Common myeloid progenitor, CD34-positive (primary cell): ENCODE measurements at regions of chr6 and their contacts with region 1.

Region 1: DNA sequence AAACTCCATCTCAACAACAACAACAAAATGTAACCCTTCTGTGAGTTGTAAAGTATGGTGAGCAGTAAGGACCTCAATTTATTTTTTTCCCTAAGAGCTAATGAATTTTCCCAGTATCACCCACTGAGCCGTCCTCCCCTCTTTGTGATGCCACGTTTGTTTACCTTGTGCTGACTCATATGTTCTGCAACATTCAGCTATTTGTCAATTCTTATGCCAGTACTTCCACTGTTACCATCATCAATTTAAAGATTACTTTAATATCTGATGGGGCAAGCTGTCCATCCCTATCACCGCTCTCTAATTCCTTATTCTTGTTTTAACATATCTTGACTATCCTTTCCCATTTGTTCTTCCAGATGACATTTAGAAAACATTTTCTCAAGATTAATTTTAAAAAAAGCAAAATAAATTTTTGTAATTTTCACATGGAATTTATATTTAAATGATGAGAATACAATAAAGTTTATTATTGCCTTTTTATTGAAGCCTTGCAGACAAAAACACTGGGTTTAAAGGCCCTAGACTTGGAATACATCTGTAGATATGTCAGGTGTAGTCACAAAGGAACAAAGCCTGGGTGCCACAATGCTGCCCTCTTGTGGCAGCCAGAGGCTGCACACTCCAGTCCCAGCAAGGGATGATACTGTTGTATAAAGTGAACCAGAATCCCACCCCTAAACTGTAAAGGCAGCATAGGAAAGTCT is 37.4 kb downstream of the MAK start:
- DNase-seq: peak; percentile 48 to 71 (median 66)
- H3K4me3 ChIP-seq: no peak overlapping the region
- H3K27ac ChIP-seq: no peak overlapping the region
- H3K4me1 ChIP-seq: no peaks in the 10 kb centered on the region
- H3K27me3 ChIP-seq: no peaks in the 10 kb centered on the region

Region 2: GRCh38 chr6:10478187-10479040 is 322.6 kb before region 1 on chr6:
- CTCF ChIA-PET with region 1: interaction called, 48 read pairs
- POLR2A ChIA-PET with region 1: no interaction called
- DNase-seq: peak; percentile 47 to 55 (median 51)
- H3K4me3 ChIP-seq: no peak overlapping the region
- H3K27ac ChIP-seq: no peak overlapping the region
- H3K4me1 ChIP-seq: no peaks in the 10 kb centered on the region
- H3K27me3 ChIP-seq: no peaks in the 10 kb centered on the region

Region 3: GRCh38 chr6:10771371-10771894 is 29.5 kb before region 1 on chr6:
- CTCF ChIA-PET with region 1: interaction called, 3 read pairs
- POLR2A ChIA-PET with region 1: interaction called, 11 read pairs
- DNase-seq: peak; percentile 23 to 70 (median 37)
- H3K4me3 ChIP-seq: no peak overlapping the region
- H3K27ac ChIP-seq: no peak overlapping the region
- H3K4me1 ChIP-seq: no peaks in the 10 kb centered on the region
- H3K27me3 ChIP-seq: no peaks in the 10 kb centered on the region